A549 (cell line): ENCODE measurements at regions of chr12 and their contacts with region 1.

Region 1: GRCh38 chr12:57904848-57905811 is 36.2 kb upstream of the ATP23 start:
- DNase-seq: peak; percentile 71 to 92
- ATAC-seq: peak; percentile 86 to 95
- H3K4me3 ChIP-seq: no peak overlapping the region
- H3K27ac ChIP-seq: peak overlapping the region; percentile 41 to 72; a peak in 5 of 6 replicates
- H3K4me1 ChIP-seq: no peaks in the 10 kb centered on the region
- CTCF ChIP-seq: peak; percentile 100
- EP300 ChIP-seq: no peak
- POLR2A ChIP-seq: no peak
- RAD21 ChIP-seq: peak; percentile 100

Region 2: GRCh38 chr12:57754411-57755193 is 150.5 kb before region 1 on chr12 and contains the start of gene MARCHF9:
- CTCF ChIA-PET with region 1: interaction called, 14 read pairs
- POLR2A ChIA-PET with region 1: no interaction called
- DNase-seq: peak in 1 of 2 experiments; percentile 59
- ATAC-seq: peak; percentile 21 to 32; a peak in 3 of 6 replicates
- H3K4me3 ChIP-seq: peak within 1 kb of the TSS; percentile 77
- H3K27ac ChIP-seq: peak within 1 kb of the TSS; percentile 71 to 94
- H3K4me1 ChIP-seq: peaks cover 34% of the 10 kb centered on the region
- CTCF ChIP-seq: no peak
- EP300 ChIP-seq: no peak
- POLR2A ChIP-seq: no peak
- RAD21 ChIP-seq: no peak
- polyA plus RNA-seq, gene MARCHF9: 7.2 and 8.4 TPM in 2 replicates

Region 3: DNA sequence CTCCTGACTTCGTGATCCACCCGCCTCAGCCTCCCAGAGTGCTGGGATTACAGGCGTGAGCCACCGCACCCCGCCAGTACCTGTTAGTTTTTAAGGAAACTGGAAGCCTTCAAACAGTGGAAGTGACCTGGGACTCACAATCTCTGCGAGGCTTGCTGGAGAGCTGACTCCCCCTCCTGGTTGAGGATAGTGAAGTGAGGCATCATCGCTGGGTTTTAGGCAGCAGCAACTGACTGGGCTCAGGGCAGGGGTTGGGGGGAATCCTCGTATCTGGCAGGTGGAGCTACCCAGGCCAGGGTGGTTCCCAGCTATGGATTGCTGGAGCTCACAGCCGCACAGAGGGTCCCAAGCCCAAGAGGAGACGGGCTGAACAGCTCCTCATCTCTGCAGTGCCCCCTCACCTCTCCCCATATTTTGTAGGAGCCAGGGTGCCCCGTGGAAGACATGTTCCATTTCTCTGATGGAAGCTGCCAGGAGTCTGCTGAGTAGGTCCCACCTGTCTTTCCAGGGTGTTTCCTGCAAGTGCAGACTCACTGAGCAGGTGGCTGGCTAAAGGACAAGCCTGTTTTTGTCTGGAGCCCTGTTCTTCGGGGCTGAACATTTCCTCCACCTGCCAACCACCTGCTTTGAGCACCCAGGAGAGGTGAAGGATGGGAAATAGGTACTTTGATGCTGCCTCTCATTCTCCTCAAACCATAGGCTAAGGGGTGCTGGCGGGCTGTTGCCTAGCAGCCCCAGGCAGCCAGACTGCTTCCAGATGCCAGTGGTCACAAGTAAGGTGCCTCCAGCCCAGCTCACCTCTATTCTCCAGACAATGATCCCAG is 89.7 kb before region 1 on chr12:
- CTCF ChIA-PET with region 1: interaction called, 31 read pairs
- POLR2A ChIA-PET with region 1: no interaction called
- DNase-seq: peak in 1 of 2 experiments; percentile 24
- ATAC-seq: peak; percentile 6 to 54; a peak in 5 of 6 replicates
- H3K4me3 ChIP-seq: no peak overlapping the region
- H3K27ac ChIP-seq: no peak overlapping the region
- H3K4me1 ChIP-seq: peaks cover 7% of the 10 kb centered on the region
- CTCF ChIP-seq: no peak
- EP300 ChIP-seq: no peak
- POLR2A ChIP-seq: no peak
- RAD21 ChIP-seq: 0 out of 5 replicates have a peak, but pooled peaks of 1 of the 2 experiments have one; percentile 15

Region 4: GRCh38 chr12:57836442-57837375 is 68.4 kb before region 1 on chr12:
- CTCF ChIA-PET with region 1: interaction called, 218 read pairs
- POLR2A ChIA-PET with region 1: interaction called, 3 read pairs
- DNase-seq: no peak
- ATAC-seq: peak in 1 of 2 experiments; percentile 12; a peak in 2 of 6 replicates
- H3K4me3 ChIP-seq: no peak overlapping the region
- H3K27ac ChIP-seq: peak overlapping the region in 1 of 2 experiments; percentile 2; a peak in 2 of 6 replicates
- H3K4me1 ChIP-seq: peaks cover 38% of the 10 kb centered on the region
- CTCF ChIP-seq: no peak
- EP300 ChIP-seq: no peak
- POLR2A ChIP-seq: no peak
- RAD21 ChIP-seq: no peak

Region 5: DNA sequence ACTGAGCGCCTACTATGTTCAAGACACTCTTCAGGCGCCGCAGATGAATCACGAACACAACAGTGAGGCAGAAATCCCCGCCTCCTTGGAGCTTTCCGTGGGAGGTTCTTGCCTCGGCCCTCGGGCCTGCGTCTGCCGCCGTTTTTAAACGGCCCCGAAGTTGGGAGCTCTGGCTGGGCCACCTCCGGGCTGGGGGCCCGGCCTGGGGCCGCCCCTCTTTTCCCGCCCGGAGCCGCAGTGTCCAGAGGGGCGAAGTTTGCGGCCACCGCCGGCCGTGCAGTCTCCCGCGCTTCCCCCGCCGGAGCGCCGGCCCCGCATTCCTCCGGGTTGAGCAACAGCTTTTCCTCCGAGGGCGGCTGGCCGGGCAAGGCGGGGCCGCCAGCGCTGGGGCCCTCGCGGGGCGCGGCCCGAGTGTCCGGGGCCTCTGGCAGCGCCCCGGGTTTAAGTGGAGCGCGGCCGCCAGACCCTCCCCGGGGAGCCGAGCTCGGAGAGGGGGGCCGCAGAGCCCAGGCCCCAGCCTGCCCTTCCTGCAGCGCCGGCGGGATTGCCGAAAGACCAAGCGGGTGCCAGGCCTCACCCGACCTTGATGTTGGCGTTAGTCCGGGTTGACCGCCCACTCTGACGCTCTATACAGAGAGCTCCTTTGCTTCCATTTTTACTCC is 39.9 kb before region 1 on chr12:
- CTCF ChIA-PET with region 1: interaction called, 11 read pairs
- POLR2A ChIA-PET with region 1: interaction called, 13 read pairs
- DNase-seq: peak; percentile 83 to 89
- ATAC-seq: peak; percentile 93 to 94
- H3K4me3 ChIP-seq: peak overlapping the region; percentile 49
- H3K27ac ChIP-seq: peak overlapping the region; percentile 93 to 99
- H3K4me1 ChIP-seq: peaks cover 25% of the 10 kb centered on the region
- CTCF ChIP-seq: no peak
- EP300 ChIP-seq: no peak
- POLR2A ChIP-seq: no peak; the same call in none of the 2 replicates
- RAD21 ChIP-seq: peak; percentile 17 to 42; a peak in 4 of 5 replicates

Region 6: GRCh38 chr12:57918147-57918546 is 13.0 kb after region 1 on chr12:
- CTCF ChIA-PET with region 1: interaction called, 36 read pairs
- POLR2A ChIA-PET with region 1: no interaction called
- DNase-seq: no peak
- ATAC-seq: no peak
- H3K4me3 ChIP-seq: no peak overlapping the region
- H3K27ac ChIP-seq: no peak overlapping the region
- H3K4me1 ChIP-seq: no peaks in the 10 kb centered on the region
- CTCF ChIP-seq: no peak
- EP300 ChIP-seq: no peak
- POLR2A ChIP-seq: no peak
- RAD21 ChIP-seq: no peak